Posterior cingulate gyrus (tissue), 11 donors: ENCODE measurements at regions of chr6 and their contacts with region 1.

Region 1: GRCh38 chr6:4008324-4009047 is 70.5 kb downstream of the FAM217A start:
- DNase-seq: no peak

Region 2: GRCh38 chr6:3615391-3616380 is 392.8 kb before region 1 on chr6:
- intact Hi-C with region 1: loop called (anchors 5 kb)
- DNase-seq: no peak

Region 3: GRCh38 chr6:4114123-4114522 is 105.6 kb after region 1 on chr6:
- intact Hi-C with region 1: no loop called
- DNase-seq: no peak

Region 4: GRCh38 chr6:4506774-4507173 is 498.3 kb after region 1 on chr6:
- intact Hi-C with region 1: no loop called
- DNase-seq: no peak